Activated CD4-positive, alpha-beta T cell treated with anti-CD3 and anti-CD28 coated beads for 36 hours (primary cell): ENCODE measurements at regions of chr7 and their contacts with region 1.

Region 1: GRCh38 chr7:146084086-146084485 is 32.5 kb upstream of the CNTNAP2 start:
- DNase-seq: no peak
- ATAC-seq: no peak
- H3K4me3 Mint-ChIP-seq: no peak overlapping the region
- H3K27ac Mint-ChIP-seq: no peak overlapping the region
- H3K4me1 Mint-ChIP-seq: no peaks in the 10 kb centered on the region
- H3K27me3 Mint-ChIP-seq: no peaks in the 10 kb centered on the region

Region 2: GRCh38 chr7:144854839-144855424 is 1229.2 kb before region 1 on chr7:
- CTCF ChIA-PET with region 1: no interaction called
- POLR2A ChIA-PET with region 1: no interaction called
- intact Hi-C with region 1: loop called in 1 of 2 experiments (anchors 10 kb)
- DNase-seq: no peak
- ATAC-seq: no peak
- H3K4me3 Mint-ChIP-seq: no peak overlapping the region
- H3K27ac Mint-ChIP-seq: no peak overlapping the region
- H3K4me1 Mint-ChIP-seq: no peaks in the 10 kb centered on the region
- H3K27me3 Mint-ChIP-seq: peaks cover 2% of the 10 kb centered on the region